BJ (cell line): ENCODE measurements at regions of chr10 and their contacts with region 1.

Region 1: DNA sequence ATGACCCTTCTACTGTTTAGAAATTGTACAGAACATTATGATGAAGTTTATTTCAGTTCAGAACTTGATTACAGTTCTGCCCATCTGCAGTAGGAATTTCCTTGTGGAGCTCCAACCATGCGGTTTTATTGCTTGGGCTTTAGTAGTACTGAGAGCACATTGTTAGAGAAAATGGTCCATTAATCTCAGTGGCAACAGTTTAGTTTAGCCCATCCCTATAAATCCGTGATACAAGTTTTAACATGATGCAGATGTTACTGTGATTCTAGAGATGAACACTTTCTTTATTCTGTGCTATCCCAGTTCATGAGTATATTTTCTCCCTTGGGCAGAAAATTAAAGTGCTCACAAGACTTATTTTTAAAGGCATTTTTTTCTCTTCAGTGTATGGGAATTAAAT is 84.8 kb upstream of the FZD8 start:
- DNase-seq: no peak
- H3K4me3 ChIP-seq: no peak overlapping the region
- H3K27me3 ChIP-seq: no peaks in the 10 kb centered on the region
- CTCF ChIP-seq: no peak

Region 2: GRCh38 chr10:35699848-35700486 is 26.9 kb before region 1 on chr10:
- CTCF ChIA-PET with region 1: interaction called, 3 read pairs
- POLR2A ChIA-PET with region 1: interaction called, 11 read pairs
- DNase-seq: no peak
- H3K4me3 ChIP-seq: no peak overlapping the region
- H3K27me3 ChIP-seq: 0 out of 2 replicates have a peak, but pooled peaks cover 3% of the 10 kb centered on the region
- CTCF ChIP-seq: no peak